GM12878 (cell line): ENCODE measurements at regions of chr11 and their contacts with region 1.

Region 1: DNA sequence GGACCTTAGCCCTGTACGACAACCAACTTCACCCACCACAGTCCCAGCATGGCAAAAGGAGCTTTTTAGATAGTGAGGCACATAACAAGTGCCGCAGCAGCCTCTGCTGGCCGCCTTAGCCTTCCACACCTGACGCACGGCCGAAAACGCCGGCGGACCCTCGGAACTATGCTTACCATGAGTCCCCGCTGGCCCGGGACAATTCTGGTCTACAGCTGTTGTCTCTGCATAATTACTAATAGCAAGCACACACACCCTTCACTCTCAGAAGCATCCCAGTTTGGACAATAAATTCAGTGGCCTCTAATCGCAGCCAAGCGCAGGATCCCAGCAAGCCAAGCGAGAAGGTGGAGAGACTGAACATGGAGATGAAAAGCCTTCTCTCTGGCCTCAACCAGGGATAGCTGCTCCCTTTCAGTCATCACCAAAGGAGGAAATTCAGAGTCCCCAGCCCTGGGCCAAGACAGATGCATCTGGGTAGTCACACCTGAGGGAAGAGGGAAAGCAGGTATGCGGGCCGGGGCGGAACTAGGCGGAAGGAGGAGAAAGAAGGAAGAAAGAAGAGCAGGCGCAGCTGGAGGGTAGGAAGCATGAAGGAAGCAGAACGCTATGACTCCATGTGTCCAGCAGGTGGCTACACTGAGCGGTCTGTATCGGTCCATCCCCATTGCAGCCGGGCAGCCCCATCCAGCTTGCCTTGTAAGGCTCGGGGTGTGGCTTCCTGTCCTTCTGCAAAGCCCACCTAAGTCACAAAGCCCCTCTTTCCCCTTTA is 40.3 kb downstream of the BUD13 start:
- DNase-seq: peak; percentile 20
- ATAC-seq: peak; percentile 95
- H3K4me3 ChIP-seq: no peak overlapping the region
- H3K27ac ChIP-seq: no peak overlapping the region
- H3K4me1 ChIP-seq: peaks cover 16% of the 10 kb centered on the region
- H3K27me3 ChIP-seq: no peaks in the 10 kb centered on the region; a peak in 1 of 4 replicates
- CTCF ChIP-seq: peak; percentile 87 to 91 (median 89)
- EP300 ChIP-seq: no peak
- POLR2A ChIP-seq: no peak
- RAD21 ChIP-seq: peak; percentile 55

Region 2: GRCh38 chr11:116715383-116715782 is 17.1 kb before region 1 on chr11:
- CTCF ChIA-PET with region 1: interaction called, 14 read pairs
- POLR2A ChIA-PET with region 1: no interaction called
- RAD21 ChIA-PET with region 1: no interaction called
- SMC1A ChIA-PET with region 1: interaction called, 3 read pairs
- in situ Hi-C with region 1: no loop called
- intact Hi-C with region 1: no loop called
- DNase-seq: no peak
- ATAC-seq: no peak
- H3K4me3 ChIP-seq: no peak overlapping the region
- H3K27ac ChIP-seq: no peak overlapping the region
- H3K4me1 ChIP-seq: no peaks in the 10 kb centered on the region
- H3K27me3 ChIP-seq: peaks cover 0 to 3% of the 10 kb centered on the region in 2 experiments; a peak in 3 of 4 replicates
- CTCF ChIP-seq: no peak
- EP300 ChIP-seq: no peak
- POLR2A ChIP-seq: no peak
- RAD21 ChIP-seq: no peak

Region 3: DNA sequence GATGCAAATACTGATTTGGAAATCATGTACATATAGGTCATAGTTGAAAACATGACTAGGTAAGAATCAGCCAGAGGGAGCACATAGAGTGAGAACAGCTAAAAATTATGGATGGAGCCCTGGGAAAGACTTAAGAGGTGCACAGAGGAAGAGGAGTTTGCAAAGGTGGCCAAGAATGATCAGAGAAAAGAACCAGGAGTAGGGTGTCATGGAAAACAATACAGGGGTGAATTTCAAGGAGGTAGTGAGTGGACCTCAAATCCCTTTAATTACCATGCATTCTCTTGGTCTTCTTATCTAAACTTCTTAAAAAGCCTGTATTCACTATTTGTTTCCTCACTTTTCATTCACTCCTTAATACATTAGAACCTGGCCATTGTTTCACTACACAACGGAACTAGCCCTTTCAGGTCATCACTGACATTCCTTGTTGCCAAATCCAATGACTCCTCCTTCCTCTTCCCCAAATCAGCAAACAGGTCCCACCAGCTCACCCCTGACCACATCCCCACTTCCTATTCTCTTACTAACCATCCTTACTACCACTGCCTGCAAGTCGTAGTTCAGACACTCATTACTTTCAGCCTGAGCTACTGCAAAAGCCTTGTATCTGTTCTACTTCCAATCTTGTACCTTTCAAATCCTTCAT is 17.7 kb after region 1 on chr11:
- CTCF ChIA-PET with region 1: interaction called, 15 read pairs
- POLR2A ChIA-PET with region 1: no interaction called
- RAD21 ChIA-PET with region 1: interaction called, 8 read pairs
- SMC1A ChIA-PET with region 1: interaction called, 5 read pairs
- in situ Hi-C with region 1: no loop called
- intact Hi-C with region 1: no loop called
- DNase-seq: no peak
- ATAC-seq: no peak
- H3K4me3 ChIP-seq: no peak overlapping the region
- H3K27ac ChIP-seq: no peak overlapping the region
- H3K4me1 ChIP-seq: no peaks in the 10 kb centered on the region
- H3K27me3 ChIP-seq: no peaks in the 10 kb centered on the region
- CTCF ChIP-seq: no peak
- EP300 ChIP-seq: no peak
- POLR2A ChIP-seq: no peak
- RAD21 ChIP-seq: no peak